MCF 10A (cell line): ENCODE measurements at regions of chr7 and their contacts with region 1.

Region 1: DNA sequence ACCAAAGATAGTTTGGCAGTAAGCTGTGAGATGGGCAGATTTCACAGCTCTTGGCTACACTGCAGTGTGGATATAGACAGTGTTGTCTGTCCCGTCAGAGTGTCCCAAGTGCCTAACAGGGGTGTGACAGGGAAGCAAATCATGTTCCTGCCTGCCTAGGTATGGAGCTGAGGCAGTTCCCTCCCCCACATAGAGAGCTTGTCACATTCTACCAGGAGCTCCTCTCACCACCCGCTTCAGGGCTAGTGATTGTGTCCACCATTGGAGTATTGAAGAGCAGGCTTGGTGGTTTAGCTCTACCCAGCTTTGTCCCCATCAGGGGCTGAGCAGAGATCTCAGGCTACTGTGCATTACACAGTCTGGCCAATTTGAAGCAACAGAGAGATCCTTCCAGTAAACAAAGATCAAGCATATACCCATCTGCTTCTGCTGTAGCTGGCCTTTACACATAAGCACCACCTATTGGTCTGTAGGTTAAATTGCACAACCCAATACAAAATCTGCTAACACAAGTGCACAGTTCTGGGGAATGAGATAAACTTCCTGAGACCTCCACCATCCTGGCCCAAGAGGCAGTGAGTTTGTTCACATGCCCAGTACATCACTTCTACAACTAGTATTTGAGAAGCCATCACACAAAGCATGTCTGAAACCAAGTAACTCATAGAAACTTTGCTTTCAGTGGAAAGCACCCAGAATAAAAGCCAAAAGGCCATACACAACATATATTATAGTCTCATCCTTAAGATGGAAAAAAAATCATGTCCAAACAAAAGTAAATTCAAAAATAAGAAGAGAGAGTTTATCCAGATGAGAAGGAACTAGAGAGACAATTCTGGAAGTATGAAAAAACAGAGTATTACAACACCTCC is 67.3 kb downstream of the GLCCI1 start:
- DNase-seq: peak; percentile 52
- H3K4me3 Mint-ChIP-seq: no peak overlapping the region
- H3K27ac Mint-ChIP-seq: no peak overlapping the region
- H3K4me1 Mint-ChIP-seq: no peaks in the 10 kb centered on the region
- H3K27me3 Mint-ChIP-seq: no peaks in the 10 kb centered on the region
- CTCF ChIP-seq: peak; percentile 50

Region 2: DNA sequence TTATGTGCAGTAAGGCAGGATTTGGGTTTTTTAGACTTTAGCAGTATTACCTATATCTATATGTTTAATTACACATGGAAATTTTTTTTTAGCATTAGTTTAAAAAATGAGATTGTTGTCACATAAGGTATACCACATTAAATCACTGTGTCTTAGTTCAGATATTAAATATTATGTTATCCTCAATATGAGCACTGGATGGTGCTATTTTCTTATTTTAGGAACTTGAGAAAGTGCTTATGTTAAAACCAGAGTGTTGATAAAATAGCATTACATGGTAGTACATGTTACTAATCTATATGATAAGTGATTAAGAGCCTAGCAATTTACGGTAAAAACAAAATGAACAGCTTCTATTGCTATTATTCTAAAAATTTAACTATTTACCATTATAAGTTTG is 440.4 kb before region 1 on chr7:
- CTCF ChIA-PET with region 1: no interaction called
- POLR2A ChIA-PET with region 1: no interaction called
- intact Hi-C with region 1: loop called (anchors 2 kb)
- DNase-seq: peak; percentile 26
- H3K4me3 Mint-ChIP-seq: no peak overlapping the region
- H3K27ac Mint-ChIP-seq: no peak overlapping the region
- H3K4me1 Mint-ChIP-seq: peaks cover 5% of the 10 kb centered on the region
- H3K27me3 Mint-ChIP-seq: no peaks in the 10 kb centered on the region
- CTCF ChIP-seq: peak; percentile 28